ENCODE measurements at regions of chr2 and their contacts with region 1.

Region 1: DNA sequence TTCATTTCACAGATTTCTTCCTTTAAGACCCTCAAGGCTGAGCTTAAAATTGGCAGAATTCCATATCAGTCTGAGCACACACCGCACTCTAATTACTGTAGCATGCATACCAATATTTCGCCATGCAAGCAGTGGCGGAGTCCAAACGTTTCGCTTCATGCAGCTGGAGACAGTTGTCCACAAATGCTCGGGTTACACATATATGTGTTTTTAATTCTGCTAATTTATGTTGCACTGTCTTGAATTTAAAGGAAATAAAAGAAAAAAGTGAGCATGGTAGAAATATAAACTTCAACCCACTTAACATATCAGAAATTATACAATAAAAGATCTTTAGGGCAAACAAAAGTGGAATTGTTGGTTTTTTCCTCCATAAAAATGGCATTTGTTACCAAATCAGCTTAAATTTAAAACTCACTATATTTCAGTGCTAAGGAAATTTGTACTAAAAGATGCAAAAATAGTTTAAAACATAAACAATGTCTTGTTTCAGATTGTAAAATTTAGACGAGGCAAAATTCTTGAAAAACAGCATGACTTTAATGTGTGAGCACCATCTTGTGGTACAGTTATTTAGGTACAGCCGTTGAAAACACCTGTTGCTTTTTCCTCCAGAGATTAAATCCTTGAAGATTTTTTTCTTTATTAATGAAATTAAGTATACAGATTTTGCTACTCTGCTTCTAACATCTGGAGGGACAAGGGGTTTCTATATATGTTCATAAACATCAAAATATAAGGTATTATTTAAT is 24.1 kb upstream of the KANSL1L start:
- DNase-seq: peak; percentile 24
- CTCF ChIP-seq: peak; percentile 71

Region 2: GRCh38 chr2:209977386-209978239 is 217.7 kb before region 1 on chr2:
- CTCF ChIA-PET with region 1: interaction called, 95 read pairs
- POLR2A ChIA-PET with region 1: no interaction called
- DNase-seq: peak; percentile 49
- CTCF ChIP-seq: peak; percentile 20

Region 3: DNA sequence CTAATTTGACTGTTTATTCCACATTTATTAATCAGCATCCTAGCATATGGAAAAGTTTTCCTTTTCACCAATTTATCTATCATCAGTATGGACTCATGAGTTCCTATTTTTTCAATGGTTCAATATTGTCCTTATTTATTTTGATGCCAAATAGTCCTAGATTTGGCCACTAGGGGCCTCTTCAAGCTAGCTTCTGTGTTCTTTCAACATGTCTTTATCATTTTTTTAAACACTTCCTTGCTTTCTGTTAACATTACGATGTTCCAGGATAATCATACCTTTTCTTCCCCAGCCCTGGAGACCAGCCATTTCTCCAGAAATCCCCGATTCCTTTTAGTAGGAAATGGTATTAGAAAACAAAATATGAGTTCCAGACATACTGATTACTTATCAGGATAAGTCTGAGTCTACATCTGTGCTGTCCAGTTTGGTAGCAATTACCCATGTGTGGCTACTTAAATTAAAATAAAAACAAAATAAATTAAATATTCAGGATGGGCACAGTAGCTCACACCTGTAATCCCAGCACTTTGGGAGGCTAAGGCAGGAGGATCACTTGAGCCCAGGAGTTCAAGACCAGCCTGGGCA is 122.3 kb before region 1 on chr2:
- CTCF ChIA-PET with region 1: interaction called, 13 read pairs
- POLR2A ChIA-PET with region 1: no interaction called
- DNase-seq: peak; percentile 18
- CTCF ChIP-seq: peak; percentile 46

Region 4: GRCh38 chr2:210207929-210208328 is 12.7 kb after region 1 on chr2:
- CTCF ChIA-PET with region 1: interaction called, 13 read pairs
- POLR2A ChIA-PET with region 1: no interaction called
- DNase-seq: no peak
- CTCF ChIP-seq: no peak

Measured in GM10248 (cell line).